ENCODE measurements at regions of chr11 and their contacts with region 1.

Region 1: GRCh38 chr11:70397983-70398833 is at the start of gene CTTN:
- DNase-seq: peak; percentile 88 to 95 (median 93)
- H3K4me3 ChIP-seq: peak within 1 kb of the TSS; percentile 84
- H3K27ac ChIP-seq: peak within 1 kb of the TSS; percentile 73 to 79
- H3K4me1 ChIP-seq: peaks cover 11% of the 10 kb centered on the region
- H3K27me3 ChIP-seq: no peaks in the 10 kb centered on the region
- CTCF ChIP-seq: no peak
- EP300 ChIP-seq: no peak
- POLR2A ChIP-seq: peak; percentile 68
- total RNA-seq, gene CTTN: 197 to 321 (median 207) TPM

Region 2: GRCh38 chr11:70281156-70281609 is 117.0 kb before region 1 on chr11:
- intact Hi-C with region 1: loop called in 1 of 4 experiments (anchors 10 kb)
- DNase-seq: peak in 1 of 5 donors; percentile 28
- H3K4me3 ChIP-seq: no peak overlapping the region
- H3K27ac ChIP-seq: no peak overlapping the region
- H3K4me1 ChIP-seq: no peaks in the 10 kb centered on the region
- H3K27me3 ChIP-seq: no peaks in the 10 kb centered on the region
- CTCF ChIP-seq: no peak
- EP300 ChIP-seq: no peak
- POLR2A ChIP-seq: no peak

Region 3: DNA sequence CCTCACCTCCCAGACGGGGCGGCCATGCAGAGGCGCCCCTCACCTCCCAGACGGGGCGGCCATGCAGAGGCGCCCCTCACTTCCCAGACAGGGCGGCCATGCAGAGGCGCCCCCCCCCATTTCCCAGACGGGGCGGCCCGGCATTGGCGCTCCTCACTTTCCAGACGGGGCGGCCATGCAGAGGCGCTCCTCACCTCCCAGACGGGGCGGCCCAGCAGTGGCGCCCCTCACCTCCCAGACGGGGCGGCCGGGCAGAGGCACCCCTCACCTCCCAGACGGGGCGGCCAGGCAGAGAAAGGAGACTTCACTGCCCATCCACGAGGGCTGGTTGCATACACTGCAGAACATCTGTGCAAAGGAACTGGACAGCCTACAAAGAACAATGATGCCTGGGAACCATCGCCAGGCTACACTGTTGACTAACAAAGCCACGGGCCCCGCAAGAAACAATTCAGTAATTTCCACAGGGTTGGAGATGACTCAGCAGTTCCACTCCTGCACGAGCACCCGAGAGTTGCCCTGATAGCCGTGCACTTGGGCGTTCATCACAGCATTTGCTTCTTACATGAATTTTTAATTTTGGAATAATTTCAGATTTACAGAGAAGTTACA is 58.8 kb after region 1 on chr11:
- intact Hi-C with region 1: no loop called
- DNase-seq: no peak
- H3K4me3 ChIP-seq: no peak overlapping the region
- H3K27ac ChIP-seq: no peak overlapping the region
- H3K4me1 ChIP-seq: no peaks in the 10 kb centered on the region
- H3K27me3 ChIP-seq: no peaks in the 10 kb centered on the region
- CTCF ChIP-seq: no peak
- EP300 ChIP-seq: no peak
- POLR2A ChIP-seq: no peak

Measured in ovary (tissue), 10 donors.